SK-N-SH (cell line): ENCODE measurements at regions of chr14 and their contacts with region 1.

Region 1: DNA sequence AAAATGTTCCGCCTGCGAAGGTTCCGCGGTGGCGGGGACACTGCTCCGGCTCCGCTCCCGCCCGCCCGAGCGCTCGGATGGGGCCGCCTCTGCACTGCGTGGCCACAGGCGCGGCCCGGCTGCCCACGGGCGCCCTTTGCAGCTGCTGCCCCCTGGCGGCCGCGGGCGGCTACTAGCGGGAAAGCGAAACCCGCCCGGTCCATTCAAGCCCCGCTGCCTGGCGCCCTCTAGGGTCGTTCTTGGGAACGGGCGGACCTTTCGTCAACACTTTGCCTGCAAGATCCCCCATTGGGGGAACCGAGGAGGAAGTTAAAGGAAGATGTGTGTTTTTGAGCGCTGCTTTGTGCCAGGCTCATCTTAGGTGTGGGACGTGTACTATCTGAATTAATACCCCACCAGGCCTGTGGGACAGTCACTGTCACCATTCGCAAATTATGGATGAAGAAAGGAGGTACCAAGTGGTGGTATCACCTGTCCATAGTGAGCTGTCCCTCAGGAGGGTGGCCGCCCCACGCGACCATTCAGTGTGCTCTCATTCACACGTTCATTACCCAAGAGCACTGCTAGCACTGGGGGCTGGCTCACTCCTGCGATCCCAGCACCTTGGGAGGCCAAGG is 19.4 kb downstream of the GPR132 start:
- DNase-seq: peak; percentile 97
- H3K4me3 ChIP-seq: peak overlapping the region in 1 of 2 experiments; percentile 50; a peak in 1 of 4 replicates
- H3K27ac ChIP-seq: no peak overlapping the region
- H3K4me1 ChIP-seq: peaks cover 0 to 5% of the 10 kb centered on the region in 2 experiments; a peak in 1 of 4 replicates
- H3K27me3 ChIP-seq: no peaks in the 10 kb centered on the region
- CTCF ChIP-seq: peak; percentile 99
- EP300 ChIP-seq: no peak
- RAD21 ChIP-seq: peak; percentile 98

Region 2: DNA sequence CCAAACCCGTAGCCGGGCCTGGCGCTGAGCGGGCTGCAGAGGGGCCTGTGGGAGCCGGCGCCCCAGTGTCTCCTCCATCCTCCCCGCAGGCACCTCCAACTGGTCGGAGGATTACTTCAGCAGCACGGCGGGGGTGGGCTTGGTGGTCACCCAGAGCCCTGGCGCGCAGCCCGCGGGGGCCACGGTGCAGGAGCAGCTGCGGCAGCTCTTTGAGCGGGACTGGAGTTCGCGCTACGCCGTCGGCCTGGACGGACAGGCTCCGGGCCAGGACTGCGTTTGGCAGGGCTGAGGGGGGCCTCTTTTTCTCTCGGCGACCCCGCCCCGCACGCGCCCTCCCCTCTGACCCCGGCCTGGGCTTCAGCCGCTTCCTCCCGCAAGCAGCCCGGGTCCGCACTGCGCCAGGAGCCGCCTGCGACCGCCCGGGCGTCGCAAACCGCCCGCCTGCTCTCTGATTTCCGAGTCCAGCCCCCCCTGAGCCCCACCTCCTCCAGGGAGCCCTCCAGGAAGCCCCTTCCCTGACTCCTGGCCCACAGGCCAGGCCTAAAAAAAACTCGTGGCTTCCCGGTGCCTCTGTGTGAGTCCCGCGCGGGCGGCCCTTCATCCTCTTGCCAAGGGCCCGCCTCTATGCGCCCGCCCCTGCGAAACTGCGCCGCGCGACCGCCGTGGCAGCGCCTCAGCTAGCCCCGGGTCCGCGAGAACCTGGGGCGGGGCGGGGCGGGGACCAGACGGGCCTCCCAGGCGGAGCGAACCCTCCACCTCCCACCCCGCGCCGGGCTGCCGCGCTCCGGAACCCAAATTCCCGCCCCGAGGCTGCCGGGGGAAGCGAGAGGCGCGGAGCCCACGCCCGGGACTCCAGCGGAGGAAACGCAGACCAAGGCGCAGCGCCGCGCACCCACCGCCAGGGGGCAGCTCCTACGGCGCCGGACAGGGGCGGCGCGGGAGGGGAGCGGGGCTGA is 112.9 kb before region 1 on chr14:
- CTCF ChIA-PET with region 1: interaction called, 20 read pairs
- POLR2A ChIA-PET with region 1: no interaction called
- DNase-seq: peak; percentile 97
- H3K4me3 ChIP-seq: peak overlapping the region; percentile 53 to 62
- H3K27ac ChIP-seq: no peak overlapping the region
- H3K4me1 ChIP-seq: peaks cover 0 to 5% of the 10 kb centered on the region in 2 experiments; a peak in 1 of 4 replicates
- H3K27me3 ChIP-seq: no peaks in the 10 kb centered on the region
- CTCF ChIP-seq: peak; percentile 48
- EP300 ChIP-seq: 0 out of 4 replicates have a peak, but pooled peaks of 1 of the 2 experiments have one; percentile 11
- RAD21 ChIP-seq: peak; percentile 31

Region 3: GRCh38 chr14:104968153-104968527 is 77.7 kb before region 1 on chr14:
- CTCF ChIA-PET with region 1: interaction called, 284 read pairs
- POLR2A ChIA-PET with region 1: no interaction called
- DNase-seq: peak; percentile 75
- H3K4me3 ChIP-seq: no peak overlapping the region
- H3K27ac ChIP-seq: no peak overlapping the region
- H3K4me1 ChIP-seq: peaks cover 27 to 37% of the 10 kb centered on the region in 2 experiments; a peak in 3 of 4 replicates
- H3K27me3 ChIP-seq: no peaks in the 10 kb centered on the region
- CTCF ChIP-seq: no peak
- EP300 ChIP-seq: no peak
- RAD21 ChIP-seq: no peak

Region 4: DNA sequence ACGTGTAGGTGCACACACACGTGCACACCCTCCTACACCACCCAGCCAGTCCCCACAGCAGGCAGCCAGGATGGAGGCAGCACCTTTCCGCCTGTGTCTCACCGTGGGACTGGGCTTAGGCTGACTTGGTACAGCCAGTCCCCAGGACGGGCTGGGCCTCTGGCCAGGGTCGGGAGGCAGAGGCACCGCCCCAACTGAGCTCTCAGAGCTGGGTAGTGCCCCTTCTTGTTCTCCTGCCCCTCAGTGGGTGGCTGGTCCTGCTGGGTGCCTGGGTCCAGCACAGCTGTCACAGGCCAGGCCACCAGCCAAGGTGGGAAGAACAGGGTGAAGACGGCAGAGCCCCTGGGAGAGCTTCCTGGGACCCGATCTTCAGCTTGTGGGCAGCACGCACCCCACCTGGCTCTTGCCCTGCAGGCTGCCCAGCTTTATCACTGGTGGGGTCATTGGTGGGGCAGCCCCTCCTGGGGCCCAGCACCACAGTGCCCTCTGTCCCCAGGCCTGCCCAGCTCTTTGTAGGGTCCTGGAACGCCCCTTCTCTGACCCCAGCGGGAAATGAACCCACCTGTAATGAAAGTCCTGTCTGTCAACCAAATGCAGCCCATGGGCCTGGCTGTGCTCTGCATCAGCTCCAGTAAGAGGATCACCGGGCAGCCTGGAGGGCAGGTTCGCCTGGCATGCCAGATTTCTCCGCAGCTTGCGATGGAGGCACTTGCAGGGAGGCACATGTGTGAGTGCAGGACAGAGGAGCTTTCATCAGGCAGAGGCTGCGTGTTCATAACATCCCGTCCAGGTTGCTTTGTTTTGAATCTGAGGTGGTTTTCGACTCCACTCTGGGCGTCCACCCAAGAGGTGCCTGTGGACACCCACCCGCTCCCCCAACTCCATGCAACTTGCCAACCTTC is 39.6 kb before region 1 on chr14:
- CTCF ChIA-PET with region 1: interaction called, 138 read pairs
- POLR2A ChIA-PET with region 1: no interaction called
- DNase-seq: no peak
- H3K4me3 ChIP-seq: no peak overlapping the region
- H3K27ac ChIP-seq: no peak overlapping the region
- H3K4me1 ChIP-seq: peaks cover 0 to 3% of the 10 kb centered on the region in 2 experiments; a peak in 1 of 4 replicates
- H3K27me3 ChIP-seq: no peaks in the 10 kb centered on the region
- CTCF ChIP-seq: no peak
- EP300 ChIP-seq: no peak
- RAD21 ChIP-seq: no peak

Region 5: GRCh38 chr14:105034314-105035039 is 11.3 kb before region 1 on chr14:
- CTCF ChIA-PET with region 1: interaction called, 63 read pairs
- POLR2A ChIA-PET with region 1: interaction called, 3 read pairs
- DNase-seq: no peak
- H3K4me3 ChIP-seq: no peak overlapping the region
- H3K27ac ChIP-seq: no peak overlapping the region
- H3K4me1 ChIP-seq: peaks cover 0 to 9% of the 10 kb centered on the region in 2 experiments; a peak in 1 of 4 replicates
- H3K27me3 ChIP-seq: no peaks in the 10 kb centered on the region
- CTCF ChIP-seq: no peak
- EP300 ChIP-seq: no peak
- RAD21 ChIP-seq: no peak

Region 6: DNA sequence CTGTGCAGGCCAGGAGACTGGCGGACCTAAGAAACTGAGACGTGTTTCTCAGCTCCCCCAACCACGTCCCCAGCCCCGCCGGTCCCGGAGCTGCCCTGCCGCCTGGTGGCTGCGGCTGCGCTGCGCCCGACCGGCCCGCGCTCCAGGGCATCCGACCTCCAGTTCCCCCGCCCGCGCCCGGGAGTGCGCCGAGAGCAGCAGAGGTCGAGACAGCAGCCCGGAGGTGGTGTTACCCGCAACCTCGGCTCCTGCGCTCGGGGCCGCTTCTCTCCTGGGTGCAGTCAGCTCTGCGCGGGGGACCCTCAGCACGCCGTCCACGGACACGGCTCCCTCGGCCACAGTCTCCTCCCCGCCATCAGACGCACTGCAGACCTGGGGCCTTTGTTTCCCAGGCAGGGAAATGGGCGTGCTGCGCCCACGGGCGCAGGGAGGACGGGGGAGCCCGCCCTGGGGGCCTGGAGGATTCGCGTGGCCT is 41.1 kb after region 1 on chr14:
- CTCF ChIA-PET with region 1: interaction called, 19 read pairs
- POLR2A ChIA-PET with region 1: no interaction called
- DNase-seq: peak; percentile 90
- H3K4me3 ChIP-seq: peak overlapping the region; percentile 37 to 38; a peak in 3 of 4 replicates
- H3K27ac ChIP-seq: no peak overlapping the region
- H3K4me1 ChIP-seq: peaks cover 1 to 29% of the 10 kb centered on the region in 2 experiments; a peak in 2 of 4 replicates
- H3K27me3 ChIP-seq: no peaks in the 10 kb centered on the region
- CTCF ChIP-seq: peak; percentile 69
- EP300 ChIP-seq: no peak
- RAD21 ChIP-seq: peak; percentile 58

Region 7: GRCh38 chr14:105102361-105102887 is 56.6 kb after region 1 on chr14:
- CTCF ChIA-PET with region 1: no interaction called
- POLR2A ChIA-PET with region 1: no interaction called
- DNase-seq: no peak
- H3K4me3 ChIP-seq: no peak overlapping the region
- H3K27ac ChIP-seq: no peak overlapping the region
- H3K4me1 ChIP-seq: no peaks in the 10 kb centered on the region
- H3K27me3 ChIP-seq: peaks cover 11% of the 10 kb centered on the region
- CTCF ChIP-seq: no peak
- EP300 ChIP-seq: no peak
- RAD21 ChIP-seq: no peak